Activated CD4-positive, alpha-beta memory T cell treated with anti-CD3 and anti-CD28 coated beads for 36 hours (primary cell): ENCODE measurements at regions of chr1 and their contacts with region 1.

Region 1: GRCh38 chr1:234610348-234611152 is 572 bp upstream of the IRF2BP2 start:
- DNase-seq: peak; percentile 94
- H3K4me3 Mint-ChIP-seq: peak overlapping the region; percentile 85
- H3K27ac Mint-ChIP-seq: peak overlapping the region; percentile 99
- H3K4me1 Mint-ChIP-seq: peaks cover 37% of the 10 kb centered on the region
- H3K27me3 Mint-ChIP-seq: peaks cover 5% of the 10 kb centered on the region

Region 2: DNA sequence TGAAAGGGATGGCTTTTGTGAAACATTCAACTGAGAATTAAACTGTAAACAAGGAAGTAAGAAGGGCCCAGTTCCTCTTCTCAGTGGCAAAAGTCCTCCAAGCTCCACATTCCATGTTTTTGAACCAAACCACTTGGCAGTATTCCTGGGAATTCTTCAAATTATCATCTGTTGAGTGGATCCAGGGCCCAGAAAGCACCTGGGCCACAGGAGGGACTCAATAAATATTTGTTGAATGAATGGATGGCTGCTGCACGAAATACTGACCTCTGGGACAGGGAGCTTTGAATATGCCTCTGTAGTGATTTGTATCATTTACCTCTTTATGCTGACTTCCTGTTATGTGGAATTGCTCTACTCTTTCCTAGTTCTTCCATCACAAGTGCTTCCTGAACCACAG is 701.4 kb before region 1 on chr1:
- CTCF ChIA-PET with region 1: no interaction called
- POLR2A ChIA-PET with region 1: no interaction called
- intact Hi-C with region 1: no loop called
- DNase-seq: no peak
- H3K4me3 Mint-ChIP-seq: no peak overlapping the region
- H3K27ac Mint-ChIP-seq: no peak overlapping the region
- H3K4me1 Mint-ChIP-seq: peaks cover 5% of the 10 kb centered on the region
- H3K27me3 Mint-ChIP-seq: peaks cover 29% of the 10 kb centered on the region

Region 3: GRCh38 chr1:234499119-234499942 is 111.2 kb before region 1 on chr1:
- CTCF ChIA-PET with region 1: interaction called, 23 read pairs
- POLR2A ChIA-PET with region 1: interaction called, 17 read pairs
- intact Hi-C with region 1: loop called (anchors 1 kb)
- DNase-seq: peak; percentile 90
- H3K4me3 Mint-ChIP-seq: peak overlapping the region; percentile 34
- H3K27ac Mint-ChIP-seq: peak overlapping the region; percentile 85
- H3K4me1 Mint-ChIP-seq: peaks cover 71% of the 10 kb centered on the region
- H3K27me3 Mint-ChIP-seq: peaks cover 4% of the 10 kb centered on the region

Region 4: GRCh38 chr1:234722904-234723720 is 112.6 kb after region 1 on chr1:
- CTCF ChIA-PET with region 1: interaction called, 29 read pairs
- POLR2A ChIA-PET with region 1: interaction called, 124 read pairs
- intact Hi-C with region 1: loop called (anchors 1 kb)
- DNase-seq: peak; percentile 91
- H3K4me3 Mint-ChIP-seq: peak overlapping the region; percentile 60
- H3K27ac Mint-ChIP-seq: peak overlapping the region; percentile 96
- H3K4me1 Mint-ChIP-seq: peaks cover 66% of the 10 kb centered on the region
- H3K27me3 Mint-ChIP-seq: no peaks in the 10 kb centered on the region

Region 5: DNA sequence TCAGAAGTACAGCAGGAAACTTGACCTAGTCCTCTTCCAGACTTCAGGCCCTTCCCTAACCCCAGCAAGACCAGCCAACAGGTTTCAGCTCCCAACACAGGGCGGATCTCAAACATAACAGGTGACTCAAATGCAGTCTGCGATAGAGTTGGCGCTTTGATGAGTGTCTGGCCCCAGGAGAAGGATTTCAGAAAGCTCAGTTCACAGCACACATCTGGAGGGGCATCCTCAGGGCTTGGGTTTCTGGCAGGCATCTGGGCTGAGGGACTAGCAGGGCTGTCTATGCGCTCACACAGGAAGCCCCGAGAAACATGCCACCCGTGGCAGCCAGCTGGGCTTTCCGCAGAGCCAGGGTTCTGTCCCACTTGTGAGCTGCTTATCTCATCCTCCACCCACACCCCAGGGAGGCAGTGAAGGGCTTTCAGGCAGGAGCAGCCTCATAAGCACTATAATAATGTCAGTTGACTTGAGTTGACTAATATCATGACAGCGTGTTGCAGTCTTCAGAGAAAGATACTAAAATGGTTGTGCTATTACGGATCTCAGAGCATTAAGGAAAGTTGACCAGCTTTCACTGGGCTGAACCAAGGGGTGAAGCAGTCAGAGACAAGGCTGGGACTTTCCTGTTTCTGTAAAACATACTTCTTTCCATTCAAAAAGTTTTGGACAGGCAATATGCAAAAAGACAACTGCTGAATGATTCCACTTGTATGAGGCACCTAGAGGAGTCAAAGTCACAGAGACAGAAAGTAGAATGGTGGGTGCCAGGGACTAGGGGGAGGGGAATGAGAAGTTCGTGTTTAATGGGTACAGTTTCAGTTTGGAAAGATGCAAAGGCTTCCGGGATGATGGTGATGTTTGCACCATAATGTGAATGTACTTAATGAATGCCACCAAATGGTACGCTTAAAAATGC is 232.4 kb after region 1 on chr1:
- CTCF ChIA-PET with region 1: interaction called, 4 read pairs
- POLR2A ChIA-PET with region 1: interaction called, 72 read pairs
- intact Hi-C with region 1: loop called (anchors 1 kb)
- DNase-seq: peak; percentile 93
- H3K4me3 Mint-ChIP-seq: peak overlapping the region; percentile 71
- H3K27ac Mint-ChIP-seq: peak overlapping the region; percentile 99
- H3K4me1 Mint-ChIP-seq: peaks cover 87% of the 10 kb centered on the region
- H3K27me3 Mint-ChIP-seq: no peaks in the 10 kb centered on the region

Region 6: DNA sequence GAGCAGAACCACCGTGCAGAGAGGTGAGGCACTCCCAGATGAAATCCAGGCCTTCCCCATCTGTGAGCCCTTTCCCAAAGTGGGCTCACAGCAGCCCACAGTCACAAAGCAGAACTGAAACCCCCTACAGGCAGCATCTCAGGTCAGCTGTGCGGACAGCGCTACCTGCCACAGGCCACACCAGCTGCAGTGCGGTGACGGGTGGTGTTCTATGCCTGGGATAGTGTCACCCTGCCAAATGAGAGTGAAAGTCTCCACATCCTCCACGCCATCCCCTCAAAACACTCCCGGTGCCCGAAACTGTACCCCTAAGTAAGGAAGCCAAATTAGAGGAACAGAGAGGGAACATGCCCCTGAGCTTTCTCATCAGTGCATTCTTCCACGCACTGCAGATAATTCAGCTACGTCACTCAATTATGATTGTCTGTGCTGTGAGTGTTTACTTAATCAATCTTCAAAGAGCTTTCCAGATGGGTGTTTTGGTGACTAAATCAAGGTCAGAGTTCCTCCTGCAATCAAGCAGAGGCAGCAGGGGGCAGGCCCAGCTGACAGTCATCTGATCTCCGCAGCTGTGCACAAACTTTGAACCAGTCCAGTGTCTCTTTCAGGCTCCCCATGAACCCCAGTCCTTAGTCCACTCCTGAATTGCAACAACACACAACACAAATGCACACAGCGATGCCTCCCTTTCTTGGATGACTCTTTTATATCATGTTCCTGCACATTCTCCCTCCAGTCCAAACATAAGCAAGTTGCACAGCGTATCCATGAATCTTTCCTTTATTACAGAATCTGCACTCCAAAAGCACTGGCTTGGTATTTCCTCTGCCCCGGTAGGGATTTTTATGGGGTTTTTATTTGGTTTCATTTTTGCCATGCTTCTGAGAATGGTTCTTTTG is 368.1 kb after region 1 on chr1:
- CTCF ChIA-PET with region 1: no interaction called
- POLR2A ChIA-PET with region 1: interaction called, 23 read pairs
- intact Hi-C with region 1: loop called (anchors 2 kb)
- DNase-seq: peak; percentile 86
- H3K4me3 Mint-ChIP-seq: peak overlapping the region; percentile 90
- H3K27ac Mint-ChIP-seq: peak overlapping the region; percentile 97
- H3K4me1 Mint-ChIP-seq: peaks cover 80% of the 10 kb centered on the region
- H3K27me3 Mint-ChIP-seq: no peaks in the 10 kb centered on the region

Region 7: GRCh38 chr1:235075188-235075926 is 464.8 kb after region 1 on chr1:
- CTCF ChIA-PET with region 1: interaction called, 4 read pairs
- POLR2A ChIA-PET with region 1: interaction called, 9 read pairs
- intact Hi-C with region 1: loop called (anchors 1 kb)
- DNase-seq: peak; percentile 95
- H3K4me3 Mint-ChIP-seq: peak overlapping the region; percentile 74
- H3K27ac Mint-ChIP-seq: peak overlapping the region; percentile 99
- H3K4me1 Mint-ChIP-seq: peaks cover 32% of the 10 kb centered on the region
- H3K27me3 Mint-ChIP-seq: no peaks in the 10 kb centered on the region